ENCODE measurements at regions of chr1 and their contacts with region 1.

Region 1: DNA sequence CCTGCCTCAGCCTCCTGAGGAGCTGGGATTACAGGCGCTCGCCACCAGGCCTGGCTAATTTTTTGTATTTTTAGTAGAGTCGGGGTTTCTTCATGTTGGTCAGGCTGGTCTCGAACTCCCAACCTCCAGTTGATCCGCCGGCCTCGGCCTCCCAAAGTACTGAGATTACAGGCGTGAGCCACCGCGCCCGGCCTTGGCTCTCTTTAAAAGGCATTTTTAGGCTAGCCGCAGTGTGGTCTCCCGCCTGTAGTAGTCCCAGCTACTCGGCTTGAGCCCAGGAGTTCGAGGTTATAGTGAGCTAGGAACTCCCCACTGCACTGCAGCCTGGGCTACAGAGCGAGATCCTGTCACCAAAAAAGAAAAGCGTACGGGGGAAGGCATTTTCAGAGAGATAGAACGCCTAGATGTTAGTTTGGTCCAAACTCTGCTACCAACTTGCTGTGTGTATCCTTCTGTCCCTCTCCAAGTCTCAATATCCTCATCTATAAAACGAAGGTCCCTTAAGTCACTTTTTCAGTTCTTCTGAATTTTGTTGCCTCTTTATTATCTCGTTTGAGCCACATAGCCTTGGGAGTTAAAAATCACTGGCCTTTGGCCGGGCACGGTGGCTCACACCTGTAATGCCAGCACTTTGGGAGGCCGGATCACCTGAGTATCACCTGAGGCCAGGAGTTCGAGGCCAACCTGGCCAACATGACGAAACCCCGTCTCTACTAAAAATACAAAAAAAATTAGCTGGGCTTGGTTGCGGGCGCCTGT is 734 bp downstream of the MED18 start:
- DNase-seq: peak; percentile 80

Region 2: GRCh38 chr1:28259307-28260167 is 70.0 kb before region 1 on chr1 and contains the start of gene SESN2:
- intact Hi-C with region 1: loop called in 1 of 2 experiments (anchors 10 kb)
- DNase-seq: peak; percentile 100
- total RNA-seq, gene SESN2: 13.7 to 16.8 TPM

Region 3: DNA sequence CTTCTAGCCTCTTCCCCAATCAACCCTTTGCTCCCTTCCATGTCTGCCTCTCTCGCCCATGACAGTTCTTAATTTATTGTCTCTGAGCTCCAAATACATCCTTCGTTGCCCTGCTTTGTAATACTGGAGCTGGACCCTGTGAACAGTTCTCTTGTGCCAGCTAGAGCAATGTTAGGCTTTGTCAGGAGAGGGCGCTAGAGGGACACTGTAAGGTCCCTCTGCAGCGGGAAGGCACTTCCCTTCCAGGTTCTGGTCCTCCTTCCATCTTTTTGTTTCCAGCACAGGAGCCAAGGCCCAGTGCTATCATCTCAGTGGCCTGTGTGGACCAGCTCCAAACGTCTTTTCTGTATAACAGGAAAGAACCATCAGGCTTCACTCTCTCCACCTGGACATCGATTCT is 1002.6 kb after region 1 on chr1:
- intact Hi-C with region 1: no loop called
- DNase-seq: peak; percentile 67